Activated T-helper 1 cell treated with anti-CD3 and anti-CD28 coated beads, Interleukin-12 subunit alpha, Interleukin-12 subunit beta, Interleukin-2, Interleukin-4 antibody, amounts not matched to agents 30 ng/mL and 10 ng/mL and 1 ng/mL, durations not matched to agents 14 hours and 24 hours and 36 hours (primary cell): ENCODE measurements at regions of chr13 and their contacts with region 1.

Region 1: DNA sequence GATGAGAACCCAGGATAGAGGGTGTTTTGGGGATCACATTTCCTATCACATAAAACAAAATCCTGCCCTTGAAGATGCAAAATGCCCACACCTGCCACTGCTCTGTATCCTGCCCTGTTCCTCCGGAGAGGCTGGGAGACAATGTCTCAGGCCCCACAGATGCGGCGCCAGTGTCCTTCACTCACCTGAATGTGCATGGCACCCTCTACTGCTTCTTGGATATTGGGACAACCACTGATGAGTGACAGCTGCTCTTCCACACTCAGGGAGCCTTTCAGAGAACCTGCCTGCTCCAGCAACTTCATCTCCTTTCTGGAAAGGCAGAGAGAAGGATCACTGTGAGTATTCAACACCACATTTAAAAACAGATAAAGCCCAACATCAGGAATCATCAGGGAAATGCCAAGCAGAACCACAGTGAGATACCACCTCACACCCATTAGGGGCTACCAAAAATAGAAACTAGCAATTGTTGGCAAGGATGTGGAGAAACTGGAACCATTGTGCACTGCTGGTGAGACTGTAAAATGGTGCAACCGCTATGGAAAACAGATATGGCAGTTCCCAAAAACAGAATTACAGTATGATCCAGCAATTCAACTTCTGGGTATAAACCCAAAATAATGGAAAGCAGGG is 36.4 kb downstream of the CRYL1 start:
- DNase-seq: peak; percentile 25
- H3K4me3 Mint-ChIP-seq: no peak overlapping the region
- H3K27ac Mint-ChIP-seq: no peak overlapping the region
- H3K4me1 Mint-ChIP-seq: peaks cover 8% of the 10 kb centered on the region
- H3K27me3 Mint-ChIP-seq: peaks cover 3% of the 10 kb centered on the region

Region 2: DNA sequence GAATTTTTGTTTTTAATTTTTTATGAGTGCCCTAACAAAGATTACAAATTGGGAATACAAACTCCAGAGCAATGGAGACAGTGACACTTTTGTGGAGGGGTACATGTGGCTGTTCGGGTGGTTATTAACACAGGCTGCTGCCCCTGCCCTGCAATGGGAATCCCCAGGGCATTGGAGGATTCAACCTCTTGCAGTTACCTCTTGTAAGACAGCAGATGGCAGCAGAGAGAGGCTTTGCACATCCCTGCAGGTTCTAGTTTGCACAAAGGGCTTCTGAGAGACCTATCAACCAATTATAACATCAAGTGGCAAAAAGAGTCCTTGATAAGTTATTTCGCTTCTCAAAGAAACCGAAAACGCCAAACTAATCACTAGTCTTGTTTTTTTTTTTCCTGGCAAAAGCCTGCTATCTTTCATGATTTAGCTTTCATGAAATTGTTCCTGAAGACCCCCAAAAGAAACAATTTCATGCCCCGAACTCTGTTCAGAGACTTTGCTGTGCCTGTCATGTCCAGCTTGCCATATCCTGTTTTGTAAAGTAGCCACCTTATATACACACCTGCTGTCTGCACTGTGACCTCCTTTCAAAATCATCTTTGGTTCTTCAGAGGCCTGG is 307.0 kb before region 1 on chr13:
- intact Hi-C with region 1: loop called (anchors 1 kb)
- DNase-seq: no peak
- H3K4me3 Mint-ChIP-seq: no peak overlapping the region
- H3K27ac Mint-ChIP-seq: no peak overlapping the region
- H3K4me1 Mint-ChIP-seq: no peaks in the 10 kb centered on the region
- H3K27me3 Mint-ChIP-seq: peaks cover 25% of the 10 kb centered on the region

Region 3: GRCh38 chr13:20301403-20302071 is 187.8 kb before region 1 on chr13:
- intact Hi-C with region 1: loop called (anchors 10 kb)
- DNase-seq: no peak
- H3K4me3 Mint-ChIP-seq: no peak overlapping the region
- H3K27ac Mint-ChIP-seq: no peak overlapping the region
- H3K4me1 Mint-ChIP-seq: no peaks in the 10 kb centered on the region
- H3K27me3 Mint-ChIP-seq: peaks cover 33% of the 10 kb centered on the region